ENCODE measurements at regions of chr5 and their contacts with region 1.

Region 1: GRCh38 chr5:139774980-139775661 is 20.5 kb upstream of the PSD2 start:
- DNase-seq: peak; percentile 88
- CTCF ChIP-seq: peak; percentile 88

Region 2: DNA sequence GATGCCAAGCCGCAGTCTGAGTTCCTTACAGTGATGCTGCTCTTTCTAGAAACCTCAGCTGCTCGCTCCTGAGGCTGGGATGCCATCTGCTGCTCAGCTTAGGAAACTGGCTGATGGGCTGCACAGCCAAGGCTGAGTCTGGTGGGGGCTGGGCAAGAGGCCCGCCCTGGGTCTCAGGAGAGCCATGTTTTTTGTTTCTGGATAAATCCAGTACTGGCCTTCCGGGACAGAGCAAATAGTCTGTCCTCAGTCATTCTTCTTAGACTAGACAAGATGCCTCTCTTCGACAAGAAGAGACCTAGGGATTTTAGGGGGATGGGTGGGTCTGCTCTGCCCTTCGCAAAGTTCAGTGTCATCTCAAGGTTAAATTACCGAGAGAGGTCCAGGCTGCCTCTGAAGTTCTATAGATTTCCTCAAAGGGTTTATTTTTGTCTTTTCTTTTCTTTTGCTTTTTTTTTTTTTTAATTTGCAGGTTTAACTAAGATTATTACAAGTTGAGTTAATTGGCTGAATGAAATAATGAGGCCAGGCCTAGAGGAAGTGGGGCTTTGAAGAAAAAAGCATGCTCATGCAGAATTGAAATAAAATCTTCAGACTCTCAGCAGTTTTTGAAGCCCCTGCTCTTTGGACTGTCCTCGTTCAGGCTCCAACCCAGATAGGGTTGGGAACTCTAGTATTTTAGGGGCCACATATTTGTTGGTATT is 512.2 kb before region 1 on chr5:
- CTCF ChIA-PET with region 1: no interaction called
- POLR2A ChIA-PET with region 1: no interaction called
- DNase-seq: peak; percentile 79
- CTCF ChIP-seq: peak; percentile 91

Region 3: DNA sequence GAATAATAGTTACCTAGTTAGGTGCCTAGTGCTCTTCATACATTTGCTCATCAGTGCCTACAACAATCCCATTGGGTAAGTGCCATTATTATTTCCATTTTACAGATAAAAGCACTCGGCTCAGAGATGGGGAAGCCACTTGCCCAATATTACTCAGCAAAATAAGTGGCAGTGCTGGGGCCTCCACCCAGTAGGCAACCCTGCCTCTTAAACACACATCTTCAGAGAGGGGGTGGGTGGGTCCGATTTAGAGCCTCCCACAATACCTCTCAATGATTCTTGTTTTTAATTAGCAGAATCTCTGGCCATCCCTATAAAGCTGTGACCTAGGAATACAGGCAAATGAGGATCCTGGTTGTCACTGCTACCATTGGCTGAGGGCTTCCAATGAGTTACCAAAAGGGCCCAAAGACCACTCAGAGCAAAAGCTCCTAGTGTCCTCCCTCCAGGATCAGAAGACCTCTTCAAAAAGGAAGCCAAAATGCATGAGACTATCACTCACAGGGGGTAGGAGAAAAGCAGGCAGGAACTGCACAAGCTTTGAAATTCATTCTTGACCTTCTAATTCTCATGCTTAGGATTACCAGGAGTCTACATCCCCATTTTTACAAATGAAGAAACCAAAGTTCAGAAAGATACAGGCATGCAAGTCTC is 250.1 kb before region 1 on chr5:
- CTCF ChIA-PET with region 1: no interaction called
- POLR2A ChIA-PET with region 1: no interaction called
- DNase-seq: peak; percentile 40
- CTCF ChIP-seq: no peak

Region 4: GRCh38 chr5:139723986-139724587 is 51.0 kb before region 1 on chr5:
- CTCF ChIA-PET with region 1: no interaction called
- POLR2A ChIA-PET with region 1: no interaction called
- DNase-seq: no peak
- CTCF ChIP-seq: no peak

Region 5: GRCh38 chr5:139844472-139845145 is 69.5 kb after region 1 on chr5:
- CTCF ChIA-PET with region 1: interaction called, 17 read pairs
- POLR2A ChIA-PET with region 1: no interaction called
- DNase-seq: peak; percentile 84
- CTCF ChIP-seq: peak; percentile 89